ENCODE measurements at regions of chr14 and their contacts with region 1.

Region 1: GRCh38 chr14:52313903-52314594 is at the start of gene PTGER2:
- DNase-seq: peak; percentile 46 to 88 (median 73)
- ATAC-seq: peak; percentile 61
- H3K4me3 ChIP-seq: peak within 1 kb of the TSS; percentile 85 to 93
- H3K4me3 Mint-ChIP-seq: peak within 1 kb of the TSS; percentile 99
- H3K27ac ChIP-seq: peak within 1 kb of the TSS; percentile 70 to 71
- H3K27ac Mint-ChIP-seq: peak within 1 kb of the TSS; percentile 92
- H3K4me1 ChIP-seq: peaks cover 65% of the 10 kb centered on the region
- H3K4me1 Mint-ChIP-seq: peaks cover 83% of the 10 kb centered on the region
- H3K27me3 ChIP-seq: no peaks in the 10 kb centered on the region
- H3K27me3 Mint-ChIP-seq: peaks cover 10% of the 10 kb centered on the region
- CTCF ChIP-seq: no peak
- total RNA-seq, gene PTGER2: 3.5 to 4.3 TPM

Region 2: GRCh38 chr14:52327374-52328226 is 13.6 kb after region 1 on chr14:
- CTCF ChIA-PET with region 1: interaction called, 3 read pairs
- POLR2A ChIA-PET with region 1: interaction called, 4 read pairs
- intact Hi-C with region 1: loop called in 1 of 2 experiments (anchors 2 kb)
- DNase-seq: no peak
- ATAC-seq: no peak
- H3K4me3 ChIP-seq: no peak overlapping the region
- H3K4me3 Mint-ChIP-seq: no peak overlapping the region
- H3K27ac ChIP-seq: peak overlapping the region in 1 of 2 experiments; percentile 60
- H3K27ac Mint-ChIP-seq: peak overlapping the region; percentile 47
- H3K4me1 ChIP-seq: peaks cover 33% of the 10 kb centered on the region
- H3K4me1 Mint-ChIP-seq: peaks cover 53% of the 10 kb centered on the region
- H3K27me3 ChIP-seq: no peaks in the 10 kb centered on the region
- H3K27me3 Mint-ChIP-seq: no peaks in the 10 kb centered on the region
- CTCF ChIP-seq: no peak

Region 3: GRCh38 chr14:52351233-52352060 is 37.4 kb after region 1 on chr14:
- CTCF ChIA-PET with region 1: no interaction called
- POLR2A ChIA-PET with region 1: interaction called, 4 read pairs
- intact Hi-C with region 1: loop called (anchors 5 kb)
- DNase-seq: peak in 2 of 9 experiments; percentile 15 to 42
- ATAC-seq: peak; percentile 39
- H3K4me3 ChIP-seq: peak overlapping the region; percentile 17 to 29
- H3K4me3 Mint-ChIP-seq: peak overlapping the region; percentile 76
- H3K27ac ChIP-seq: peak overlapping the region; percentile 36 to 65
- H3K27ac Mint-ChIP-seq: peak overlapping the region; percentile 93
- H3K4me1 ChIP-seq: peaks cover 53% of the 10 kb centered on the region
- H3K4me1 Mint-ChIP-seq: peaks cover 65% of the 10 kb centered on the region
- H3K27me3 ChIP-seq: no peaks in the 10 kb centered on the region
- H3K27me3 Mint-ChIP-seq: no peaks in the 10 kb centered on the region
- CTCF ChIP-seq: no peak

Region 4: DNA sequence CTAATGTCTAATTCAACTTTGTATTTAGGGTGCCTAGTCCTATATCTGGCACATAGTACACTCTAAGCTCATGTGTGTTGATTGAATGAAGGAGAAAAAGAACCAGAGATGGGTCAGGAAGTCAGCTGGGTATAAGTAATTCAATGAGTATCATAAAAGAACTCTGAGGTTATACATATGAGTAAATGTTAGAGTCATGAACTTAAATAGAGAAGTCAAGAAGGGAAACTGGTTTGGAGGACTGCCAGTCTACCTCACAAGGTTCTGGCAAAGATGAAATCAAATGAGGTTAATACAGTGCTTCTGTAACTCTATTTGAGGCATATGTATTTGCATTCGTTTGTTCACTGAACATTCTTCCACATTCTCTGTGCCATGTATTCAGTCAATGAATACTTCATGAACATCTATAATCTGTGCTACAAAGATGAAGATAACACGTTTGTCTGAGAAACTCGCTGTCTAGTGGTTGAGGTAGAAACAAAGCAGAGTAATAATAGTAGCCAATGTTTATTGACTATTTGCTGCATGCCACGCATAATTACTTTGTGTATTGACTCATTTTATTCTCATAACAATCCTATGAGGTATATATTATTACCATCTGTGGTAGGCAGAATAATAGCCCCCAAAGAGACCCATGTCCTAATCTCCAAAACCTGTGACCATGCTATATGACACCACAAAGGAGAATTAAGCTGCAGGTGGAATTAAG is 88.9 kb after region 1 on chr14:
- CTCF ChIA-PET with region 1: interaction called, 4 read pairs
- POLR2A ChIA-PET with region 1: interaction called, 3 read pairs
- intact Hi-C with region 1: loop called (anchors 5 kb)
- DNase-seq: peak in 2 of 9 experiments; percentile 28 to 43
- ATAC-seq: peak; percentile 69
- H3K4me3 ChIP-seq: no peak overlapping the region
- H3K4me3 Mint-ChIP-seq: no peak overlapping the region
- H3K27ac ChIP-seq: no peak overlapping the region
- H3K27ac Mint-ChIP-seq: peak overlapping the region; percentile 34
- H3K4me1 ChIP-seq: peaks cover 47% of the 10 kb centered on the region
- H3K4me1 Mint-ChIP-seq: peaks cover 57% of the 10 kb centered on the region
- H3K27me3 ChIP-seq: no peaks in the 10 kb centered on the region
- H3K27me3 Mint-ChIP-seq: no peaks in the 10 kb centered on the region
- CTCF ChIP-seq: no peak

Region 5: GRCh38 chr14:52748647-52749292 is 434.7 kb after region 1 on chr14:
- CTCF ChIA-PET with region 1: no interaction called
- POLR2A ChIA-PET with region 1: no interaction called
- intact Hi-C with region 1: no loop called
- DNase-seq: no peak
- ATAC-seq: no peak
- H3K4me3 ChIP-seq: no peak overlapping the region
- H3K4me3 Mint-ChIP-seq: no peak overlapping the region
- H3K27ac ChIP-seq: no peak overlapping the region
- H3K27ac Mint-ChIP-seq: peak overlapping the region; percentile 62
- H3K4me1 ChIP-seq: peaks cover 16% of the 10 kb centered on the region
- H3K4me1 Mint-ChIP-seq: peaks cover 33% of the 10 kb centered on the region
- H3K27me3 ChIP-seq: no peaks in the 10 kb centered on the region
- H3K27me3 Mint-ChIP-seq: no peaks in the 10 kb centered on the region
- CTCF ChIP-seq: no peak